ENCODE measurements at regions of chr5 and their contacts with region 1.

Region 1: GRCh38 chr5:138054847-138055558 is 22.1 kb upstream of the FAM13B start:
- DNase-seq: no peak
- H3K4me3 Mint-ChIP-seq: no peak overlapping the region
- H3K27ac Mint-ChIP-seq: no peak overlapping the region
- H3K4me1 Mint-ChIP-seq: peaks cover 10% of the 10 kb centered on the region
- H3K27me3 Mint-ChIP-seq: peaks cover 6% of the 10 kb centered on the region

Region 2: GRCh38 chr5:137201876-137202275 is 853.1 kb before region 1 on chr5:
- CTCF ChIA-PET with region 1: no interaction called
- POLR2A ChIA-PET with region 1: interaction called, 10 read pairs
- DNase-seq: no peak
- H3K4me3 Mint-ChIP-seq: no peak overlapping the region
- H3K27ac Mint-ChIP-seq: no peak overlapping the region
- H3K4me1 Mint-ChIP-seq: no peaks in the 10 kb centered on the region
- H3K27me3 Mint-ChIP-seq: no peaks in the 10 kb centered on the region

Region 3: DNA sequence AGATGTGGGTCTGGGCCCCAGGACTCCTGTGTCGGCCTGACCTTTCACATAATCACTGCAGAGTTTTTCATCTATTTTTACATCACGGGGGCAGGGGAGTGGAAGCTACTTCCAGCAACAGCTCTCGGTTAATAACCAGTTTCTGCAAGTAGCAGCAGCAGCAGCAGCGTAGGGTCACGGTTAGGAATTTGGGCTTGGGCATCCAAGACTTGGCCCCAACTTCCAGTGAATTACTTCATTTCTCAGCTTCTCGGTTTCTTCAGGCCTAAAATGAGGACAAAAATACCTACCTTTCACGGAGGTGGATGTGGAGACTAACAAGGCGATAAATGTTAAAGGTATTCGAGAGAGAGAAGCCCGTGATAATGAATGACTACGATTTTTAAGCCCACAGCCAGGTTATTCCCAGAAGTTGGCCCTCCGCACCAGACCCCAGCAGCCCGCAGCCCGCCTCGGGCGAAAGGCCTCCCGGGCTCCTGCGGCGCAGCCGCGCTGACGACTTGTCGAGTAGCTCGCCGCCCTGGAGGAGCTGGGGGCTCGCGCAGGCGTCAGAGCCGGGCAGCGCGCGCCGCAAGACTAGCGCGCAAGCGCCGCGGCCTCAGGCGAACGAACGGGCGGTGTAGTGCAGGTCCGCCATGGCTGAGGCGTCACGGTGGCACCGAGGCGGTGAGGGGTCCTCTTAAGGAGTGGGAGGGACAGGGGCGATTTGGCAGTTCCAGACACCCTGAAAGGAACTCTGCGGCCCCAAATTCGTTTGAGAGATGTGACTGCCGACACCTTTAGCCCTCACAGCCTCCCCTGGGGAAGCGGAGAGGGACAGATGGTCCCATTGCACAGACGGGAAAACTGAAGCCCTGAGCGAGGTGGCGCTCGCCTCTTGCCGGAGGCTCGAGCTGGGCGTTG is 165.9 kb before region 1 on chr5 and contains the start of gene PKD2L2:
- CTCF ChIA-PET with region 1: no interaction called
- POLR2A ChIA-PET with region 1: no interaction called
- DNase-seq: peak; percentile 82
- H3K4me3 Mint-ChIP-seq: peak within 1 kb of the TSS; percentile 81
- H3K27ac Mint-ChIP-seq: peak within 1 kb of the TSS; percentile 95
- H3K4me1 Mint-ChIP-seq: peaks cover 24% of the 10 kb centered on the region
- H3K27me3 Mint-ChIP-seq: peaks cover 5% of the 10 kb centered on the region
- total RNA-seq, gene PKD2L2: not detected